ENCODE measurements at regions of chr3 and their contacts with region 1.

Region 1: DNA sequence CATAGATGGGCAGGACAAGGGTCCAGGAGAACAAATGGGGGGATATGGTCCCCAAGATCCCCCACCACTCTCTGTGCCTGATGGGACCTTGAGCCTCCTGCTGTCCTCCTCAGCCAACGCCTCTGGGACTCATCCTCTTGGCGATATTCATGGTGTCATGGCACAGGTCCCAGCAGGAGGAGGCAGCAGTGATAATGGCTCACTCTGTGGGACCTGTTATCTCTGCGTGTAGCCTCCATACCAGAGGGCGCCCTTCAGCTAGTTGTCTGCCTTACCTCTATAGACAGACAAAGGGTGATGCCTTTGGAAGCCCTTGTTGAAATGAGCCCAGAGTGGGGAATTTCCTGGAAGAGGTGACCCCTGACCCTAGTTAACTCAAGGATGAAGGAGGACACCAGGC is 7.4 kb downstream of the ZBTB47 start:
- DNase-seq: no peak
- ATAC-seq: peak; percentile 28
- H3K4me3 Mint-ChIP-seq: no peak overlapping the region
- H3K27ac Mint-ChIP-seq: no peak overlapping the region
- H3K4me1 Mint-ChIP-seq: no peaks in the 10 kb centered on the region
- H3K27me3 Mint-ChIP-seq: no peaks in the 10 kb centered on the region

Region 2: DNA sequence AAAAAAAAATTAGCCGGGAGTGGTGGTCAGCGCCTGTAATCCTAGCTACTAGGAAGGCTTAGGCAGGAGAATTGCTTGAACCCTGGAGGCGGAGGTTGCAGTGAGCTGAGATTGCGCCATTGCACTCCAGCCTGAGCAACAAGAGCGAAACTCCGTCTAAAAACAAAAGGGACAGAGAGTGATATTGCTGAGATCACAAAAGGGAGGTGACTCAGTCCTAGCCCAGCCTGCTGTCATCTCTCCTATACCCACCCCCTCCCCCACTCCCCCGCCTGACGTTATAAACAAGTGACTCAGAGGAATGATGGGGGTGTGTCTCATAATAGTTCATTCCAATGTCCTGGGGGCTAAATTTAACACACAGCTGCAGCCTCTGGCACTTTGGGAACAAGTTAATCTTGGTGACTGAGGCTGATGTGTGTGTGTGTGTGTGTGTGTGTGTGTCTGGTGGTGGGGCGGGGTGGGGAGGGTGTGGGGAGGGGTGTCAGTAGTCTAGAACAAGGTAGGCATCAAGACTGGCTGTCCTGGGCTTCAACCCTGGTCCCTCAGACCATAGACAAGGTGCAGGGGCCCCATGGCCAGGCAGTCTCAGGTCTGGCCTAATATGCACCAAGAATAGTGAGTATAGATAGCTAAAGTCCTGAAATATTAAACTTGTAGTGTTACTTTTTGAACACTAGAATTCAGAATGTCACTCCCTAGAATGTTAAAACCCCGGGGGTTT is 23.1 kb after region 1 on chr3:
- CTCF ChIA-PET with region 1: no interaction called
- DNase-seq: peak; percentile 53
- ATAC-seq: peak; percentile 70
- H3K4me3 Mint-ChIP-seq: no peak overlapping the region
- H3K27ac Mint-ChIP-seq: no peak overlapping the region
- H3K4me1 Mint-ChIP-seq: peaks cover 7% of the 10 kb centered on the region
- H3K27me3 Mint-ChIP-seq: peaks cover 36% of the 10 kb centered on the region

Region 3: GRCh38 chr3:42746455-42747450 is 85.9 kb after region 1 on chr3:
- CTCF ChIA-PET with region 1: interaction called, 15 read pairs
- DNase-seq: peak; percentile 29
- ATAC-seq: no peak
- H3K4me3 Mint-ChIP-seq: no peak overlapping the region
- H3K27ac Mint-ChIP-seq: no peak overlapping the region
- H3K4me1 Mint-ChIP-seq: peaks cover 14% of the 10 kb centered on the region
- H3K27me3 Mint-ChIP-seq: no peaks in the 10 kb centered on the region

Region 4: DNA sequence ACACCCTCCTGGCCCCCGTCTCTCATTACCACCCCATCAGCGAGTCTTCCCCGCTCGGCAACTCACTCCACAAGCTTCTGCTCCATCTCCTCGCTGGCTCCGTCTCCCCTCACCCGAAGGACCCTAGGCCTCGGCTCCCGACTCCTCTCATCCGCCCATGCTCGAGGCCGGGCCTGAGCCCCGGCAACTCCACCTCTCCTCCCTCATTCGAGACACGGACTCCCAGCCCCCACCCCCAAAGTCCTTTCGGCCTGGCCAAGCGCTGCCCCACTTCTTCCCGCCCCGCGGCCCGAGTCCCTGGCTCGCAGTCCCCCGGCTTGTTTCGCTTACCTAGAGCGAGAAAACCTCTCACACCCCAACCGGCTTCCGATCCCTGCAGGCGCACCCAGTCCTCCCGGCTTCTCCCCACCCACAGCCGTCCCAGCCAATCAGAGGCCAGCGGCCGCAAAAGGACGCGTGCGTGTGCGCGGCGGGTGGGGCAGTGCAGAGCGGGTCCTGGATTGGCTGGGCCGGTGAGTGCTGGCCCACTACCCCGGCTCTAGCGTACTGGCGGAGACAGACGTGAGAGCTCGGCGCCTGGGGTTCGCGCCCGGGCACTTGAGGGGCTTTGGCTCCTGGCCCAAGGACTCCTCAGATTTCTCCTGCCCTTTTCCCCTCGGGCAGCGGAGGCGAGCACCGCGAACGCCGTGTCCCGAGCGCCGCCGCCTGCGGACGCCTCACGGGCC is 143.4 kb after region 1 on chr3 and contains the start of gene HIGD1A:
- CTCF ChIA-PET with region 1: no interaction called
- DNase-seq: peak; percentile 96
- ATAC-seq: peak; percentile 99
- H3K4me3 Mint-ChIP-seq: peak within 1 kb of the TSS; percentile 100
- H3K27ac Mint-ChIP-seq: peak within 1 kb of the TSS; percentile 95
- H3K4me1 Mint-ChIP-seq: peaks cover 38% of the 10 kb centered on the region
- H3K27me3 Mint-ChIP-seq: peaks cover 31% of the 10 kb centered on the region
- total RNA-seq, gene HIGD1A: 53.6 to 71.1 TPM